WTC11 (cell line): ENCODE measurements at regions of chr20 and their contacts with region 1.

Region 1: DNA sequence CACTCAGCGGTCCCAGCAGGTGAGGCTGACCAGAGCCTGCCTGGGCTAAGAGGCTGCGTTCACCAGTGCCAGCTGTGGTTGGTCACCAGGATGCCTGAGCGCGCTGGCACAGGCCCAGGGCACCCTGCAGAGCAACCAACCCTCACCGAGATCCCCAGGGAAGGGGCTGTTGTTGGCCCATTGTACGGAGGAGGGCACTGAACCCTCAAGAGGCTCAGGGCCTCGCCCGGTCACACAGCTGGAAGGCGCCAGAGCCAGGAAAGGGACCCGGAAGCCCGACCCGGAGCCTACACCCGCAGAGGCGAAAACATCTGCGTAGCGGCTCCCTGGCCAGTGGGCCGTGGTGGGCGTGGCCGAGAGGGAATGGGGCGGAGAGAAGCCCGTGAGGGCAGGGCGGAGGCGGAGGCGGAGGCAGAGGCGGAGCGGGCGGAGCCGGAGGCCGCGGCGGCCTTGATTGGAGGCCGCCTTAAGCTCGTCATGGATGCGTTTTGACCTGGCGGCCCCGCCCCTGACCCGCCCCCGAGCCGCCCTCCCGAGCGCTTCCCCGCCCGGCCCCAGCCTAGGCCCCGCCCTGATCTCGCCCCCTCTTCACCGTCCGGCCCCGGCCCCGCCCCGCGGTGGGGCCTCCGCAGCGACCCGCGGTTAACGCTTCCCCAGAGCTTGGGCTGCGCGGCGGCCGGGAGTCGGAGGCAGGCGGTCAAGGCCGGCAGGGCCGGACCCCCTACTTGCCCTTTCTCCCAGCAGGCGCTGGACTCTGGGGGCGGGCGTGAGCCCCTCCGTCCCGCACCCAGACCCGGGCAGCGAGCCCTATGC is 2.2 kb upstream of the MRGBP start:
- DNase-seq: peak; percentile 98
- ATAC-seq: peak; percentile 83
- H3K4me3 Mint-ChIP-seq: peak overlapping the region; percentile 79
- H3K27ac Mint-ChIP-seq: no peak overlapping the region
- H3K4me1 Mint-ChIP-seq: peaks cover 16% of the 10 kb centered on the region
- H3K27me3 Mint-ChIP-seq: peaks cover 19% of the 10 kb centered on the region
- CTCF ChIP-seq: no peak

Region 2: DNA sequence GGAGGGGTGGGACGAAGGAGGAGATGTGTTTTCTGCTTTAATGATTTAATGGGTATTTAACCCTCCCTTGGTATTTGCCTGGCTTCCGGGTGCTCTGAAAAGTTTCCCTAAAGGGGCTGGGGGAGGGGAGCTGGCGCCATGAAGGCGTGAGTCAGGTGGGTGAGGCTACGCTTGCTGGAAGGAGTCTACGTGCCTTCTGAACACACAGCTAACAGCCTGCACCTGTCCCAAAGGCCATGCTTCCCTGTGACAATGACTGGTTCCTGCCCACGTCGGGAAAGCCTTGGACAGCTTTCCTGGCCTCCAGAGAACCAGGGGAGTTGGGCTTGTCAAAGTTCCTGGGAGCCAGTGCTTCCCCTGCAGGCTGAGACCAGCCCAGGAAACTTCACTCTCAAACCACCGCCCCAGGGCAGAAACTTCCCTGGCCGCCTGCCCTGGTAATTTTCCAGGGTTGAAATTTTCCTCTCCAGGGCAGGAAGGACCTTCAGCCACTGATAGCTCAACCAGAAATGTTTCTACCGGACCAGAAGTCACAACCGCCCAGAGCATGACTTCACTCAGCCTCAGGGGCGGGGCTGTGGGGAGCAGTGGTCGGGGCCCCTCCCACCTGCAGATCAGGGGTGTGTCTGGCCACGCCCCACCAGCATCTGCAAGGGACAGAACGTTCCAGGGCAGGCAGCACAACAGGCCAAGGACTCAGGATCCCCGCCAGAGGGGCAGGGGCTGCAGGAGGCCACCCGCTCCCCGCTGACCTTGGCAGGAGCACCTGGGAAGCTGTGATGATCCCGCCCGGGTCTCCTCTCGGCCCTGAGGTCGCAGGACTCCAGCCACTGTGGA is 170.4 kb before region 1 on chr20:
- CTCF ChIA-PET with region 1: interaction called, 10 read pairs
- POLR2A ChIA-PET with region 1: no interaction called
- DNase-seq: peak; percentile 90
- ATAC-seq: peak; percentile 93
- H3K4me3 Mint-ChIP-seq: peak overlapping the region; percentile 46
- H3K27ac Mint-ChIP-seq: peak overlapping the region; percentile 80
- H3K4me1 Mint-ChIP-seq: peaks cover 25% of the 10 kb centered on the region
- H3K27me3 Mint-ChIP-seq: no peaks in the 10 kb centered on the region
- CTCF ChIP-seq: no peak

Region 3: GRCh38 chr20:62685781-62686555 is 108.2 kb before region 1 on chr20:
- CTCF ChIA-PET with region 1: interaction called, 15 read pairs
- POLR2A ChIA-PET with region 1: no interaction called
- DNase-seq: no peak
- ATAC-seq: no peak; the same call in none of the 2 replicates
- H3K4me3 Mint-ChIP-seq: no peak overlapping the region
- H3K27ac Mint-ChIP-seq: peak overlapping the region; percentile 50; the same call in 1 of the 2 replicates
- H3K4me1 Mint-ChIP-seq: peaks cover 6% of the 10 kb centered on the region; the same call in 1 of the 2 replicates
- H3K27me3 Mint-ChIP-seq: peaks cover under 1% of the 10 kb centered on the region; the same call in 1 of the 2 replicates
- CTCF ChIP-seq: no peak

Region 4: DNA sequence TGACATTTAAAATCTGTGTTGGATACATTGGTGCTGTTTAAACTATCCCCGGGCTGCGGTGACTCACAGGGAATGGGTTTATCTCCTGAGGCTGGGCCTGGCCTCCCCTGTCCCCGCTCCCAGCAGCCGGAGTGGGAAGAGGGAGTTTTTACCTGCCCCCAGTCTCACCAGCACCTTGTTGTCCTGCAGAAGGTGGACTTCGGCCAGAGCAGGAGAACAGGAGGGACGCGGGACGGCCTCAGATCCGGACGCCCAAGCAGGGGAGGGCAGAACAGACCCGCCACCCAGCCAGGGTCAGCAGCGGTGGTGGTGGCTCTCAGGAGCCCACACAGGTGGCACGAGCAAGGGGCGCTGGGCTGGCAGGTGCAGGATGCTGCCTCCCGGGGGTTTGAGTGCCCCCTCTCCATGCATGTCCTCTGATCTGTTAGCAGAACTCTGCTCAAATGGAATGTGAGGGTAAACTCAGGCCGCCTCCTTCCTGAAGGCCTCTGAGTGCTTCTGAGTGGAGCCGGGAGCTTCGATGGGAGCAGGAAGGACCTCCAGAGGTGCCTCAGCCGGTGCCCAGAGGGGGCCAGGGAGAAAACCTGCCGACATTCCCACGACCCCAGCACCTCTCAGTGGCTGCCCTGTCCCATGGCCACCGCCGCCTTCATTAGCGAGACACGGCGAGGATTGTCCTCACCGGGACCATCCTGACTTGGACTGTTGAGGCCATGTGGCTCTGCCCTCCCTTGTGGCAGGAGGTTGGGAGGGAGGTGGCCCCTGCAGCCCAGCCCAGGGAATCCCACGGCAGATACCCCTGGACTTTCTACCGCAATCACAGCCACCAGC is 41.2 kb before region 1 on chr20:
- CTCF ChIA-PET with region 1: interaction called, 12 read pairs
- POLR2A ChIA-PET with region 1: interaction called, 3 read pairs
- DNase-seq: no peak
- ATAC-seq: peak; percentile 35
- H3K4me3 Mint-ChIP-seq: no peak overlapping the region
- H3K27ac Mint-ChIP-seq: no peak overlapping the region
- H3K4me1 Mint-ChIP-seq: 0 out of 2 replicates have a peak, but pooled peaks cover 3% of the 10 kb centered on the region
- H3K27me3 Mint-ChIP-seq: peaks cover 9% of the 10 kb centered on the region
- CTCF ChIP-seq: no peak

Region 5: GRCh38 chr20:62808211-62808865 is 14.2 kb after region 1 on chr20:
- CTCF ChIA-PET with region 1: interaction called, 17 read pairs
- POLR2A ChIA-PET with region 1: no interaction called
- DNase-seq: peak; percentile 88
- ATAC-seq: peak; percentile 73
- H3K4me3 Mint-ChIP-seq: no peak overlapping the region
- H3K27ac Mint-ChIP-seq: 0 out of 2 replicates have a peak overlapping the region, but pooled peaks have one; percentile 45
- H3K4me1 Mint-ChIP-seq: peaks cover 11% of the 10 kb centered on the region
- H3K27me3 Mint-ChIP-seq: peaks cover 7% of the 10 kb centered on the region; the same call in 1 of the 2 replicates
- CTCF ChIP-seq: peak; percentile 89

Region 6: GRCh38 chr20:63220696-63221399 is 426.7 kb after region 1 on chr20:
- CTCF ChIA-PET with region 1: no interaction called
- POLR2A ChIA-PET with region 1: no interaction called
- DNase-seq: no peak
- ATAC-seq: no peak
- H3K4me3 Mint-ChIP-seq: no peak overlapping the region
- H3K27ac Mint-ChIP-seq: peak overlapping the region; percentile 72; the same call in 1 of the 2 replicates
- H3K4me1 Mint-ChIP-seq: peaks cover 7% of the 10 kb centered on the region
- H3K27me3 Mint-ChIP-seq: peaks cover 4% of the 10 kb centered on the region; the same call in 1 of the 2 replicates
- CTCF ChIP-seq: no peak